Heart left ventricle (tissue), 16 donors: ENCODE measurements at regions of chr4 and their contacts with region 1.

Region 1: DNA sequence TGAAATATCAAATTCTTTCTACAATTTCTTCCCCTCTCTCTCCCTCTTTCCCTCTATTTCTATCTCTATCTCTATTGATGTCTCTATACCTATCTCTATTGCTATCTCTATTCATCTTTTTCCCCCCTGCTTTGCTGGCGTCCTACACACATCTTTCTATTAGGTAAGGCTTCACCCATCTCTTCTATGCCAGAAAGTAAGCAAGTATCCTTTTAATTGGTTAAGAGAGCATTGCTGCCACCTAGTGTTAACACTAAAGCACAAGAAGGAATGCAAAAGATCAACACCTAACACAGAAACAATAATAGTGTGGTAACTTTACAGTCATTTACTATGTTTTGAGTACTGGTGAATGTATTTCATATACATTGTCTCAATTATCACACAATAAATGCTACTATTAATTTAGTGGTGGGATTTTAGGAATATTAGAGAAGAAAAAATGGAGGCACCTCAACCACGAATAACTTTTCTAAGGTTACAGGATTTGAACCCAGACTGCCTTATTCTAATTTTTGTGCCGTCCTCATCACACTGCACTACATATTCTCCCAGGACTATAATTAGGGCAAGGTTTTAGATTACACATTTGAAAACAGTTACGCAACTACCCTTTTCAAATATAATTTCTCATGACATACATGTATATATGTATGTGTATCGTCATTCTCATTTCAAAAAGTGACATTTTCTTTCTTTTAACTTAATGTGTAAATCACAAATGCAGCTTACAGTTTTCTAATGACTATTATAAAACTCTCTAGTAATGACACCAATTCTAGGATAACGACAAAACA is 3.7 kb upstream of the C4orf36 start:
- DNase-seq: peak in 1 of 5 donors; percentile 22
- ATAC-seq: peak in 3 of 4 donors; percentile 42 to 59 (median 46)
- H3K4me3 ChIP-seq: no peak overlapping the region
- H3K27ac ChIP-seq: no peak overlapping the region
- H3K4me1 ChIP-seq: peaks cover 0 to 19% (median 4%) of the 10 kb centered on the region in 12 donors
- H3K27me3 ChIP-seq: peaks cover 0 to 9% (median 0%) of the 10 kb centered on the region in 9 donors
- CTCF ChIP-seq: peak; percentile 62 to 87 (median 78)
- POLR2A ChIP-seq: no peak

Region 2: GRCh38 chr4:86497980-86498862 is 397.7 kb before region 1 on chr4:
- intact Hi-C with region 1: loop called (anchors 1 to 2 kb)
- DNase-seq: no peak
- ATAC-seq: peak; percentile 55 to 90 (median 80)
- H3K4me3 ChIP-seq: no peak overlapping the region
- H3K27ac ChIP-seq: no peak overlapping the region
- H3K4me1 ChIP-seq: peaks cover 0 to 13% (median 0%) of the 10 kb centered on the region in 12 donors
- H3K27me3 ChIP-seq: peaks cover 0 to 6% (median 0%) of the 10 kb centered on the region in 9 donors
- CTCF ChIP-seq: peak; percentile 64 to 85 (median 77)
- POLR2A ChIP-seq: no peak

Region 3: GRCh38 chr4:86593688-86594558 is 302.0 kb before region 1 on chr4 and contains the start of gene PTPN13:
- intact Hi-C with region 1: loop called in 2 of 10 experiments (anchors 10 kb)
- DNase-seq: peak; percentile 91 to 96 (median 94)
- ATAC-seq: peak; percentile 95 to 99 (median 98)
- H3K4me3 ChIP-seq: peak within 1 kb of the TSS; percentile 36 to 74 (median 62)
- H3K27ac ChIP-seq: peak within 1 kb of the TSS; percentile 58 to 88 (median 72)
- H3K4me1 ChIP-seq: peaks cover 0 to 24% (median 4%) of the 10 kb centered on the region in 12 donors
- H3K27me3 ChIP-seq: peaks cover 0 to 29% (median 6%) of the 10 kb centered on the region in 9 donors
- CTCF ChIP-seq: no peak
- POLR2A ChIP-seq: peak in 1 of 2 donors; percentile 88
- total RNA-seq, gene PTPN13: 1.3 to 14.3 (median 4.3) TPM

Region 4: DNA sequence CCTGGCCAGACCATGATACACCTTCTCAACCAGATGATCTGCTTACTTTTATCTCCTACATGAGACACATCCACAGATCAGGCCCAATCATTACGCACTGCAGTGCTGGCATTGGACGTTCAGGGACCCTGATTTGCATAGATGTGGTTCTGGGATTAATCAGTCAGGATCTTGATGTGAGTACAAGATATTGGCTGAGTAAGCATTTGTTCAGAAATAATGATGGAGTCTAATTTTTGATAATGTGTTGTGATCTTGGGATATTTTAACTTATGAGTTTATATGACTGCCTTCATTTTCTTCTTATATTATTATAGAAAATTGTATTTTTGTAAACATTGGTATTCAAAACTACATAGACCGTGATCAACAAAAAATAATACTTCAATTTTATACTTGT is 86.1 kb before region 1 on chr4:
- intact Hi-C with region 1: loop called in 1 of 10 experiments (anchors 10 kb)
- DNase-seq: no peak
- ATAC-seq: no peak
- H3K4me3 ChIP-seq: no peak overlapping the region
- H3K27ac ChIP-seq: no peak overlapping the region
- H3K4me1 ChIP-seq: no peaks in the 10 kb centered on the region
- H3K27me3 ChIP-seq: no peaks in the 10 kb centered on the region
- CTCF ChIP-seq: no peak
- POLR2A ChIP-seq: no peak

Region 5: GRCh38 chr4:87144356-87144755 is 248.5 kb after region 1 on chr4:
- intact Hi-C with region 1: no loop called
- DNase-seq: no peak
- ATAC-seq: no peak
- H3K4me3 ChIP-seq: no peak overlapping the region
- H3K27ac ChIP-seq: no peak overlapping the region
- H3K4me1 ChIP-seq: peaks cover 0 to 11% (median 0%) of the 10 kb centered on the region in 12 donors
- H3K27me3 ChIP-seq: no peaks in the 10 kb centered on the region
- CTCF ChIP-seq: no peak
- POLR2A ChIP-seq: no peak